ENCODE measurements at regions of chr11 and their contacts with region 1.

Region 1: GRCh38 chr11:115269191-115269950 is 234.8 kb downstream of the CADM1 start:
- DNase-seq: no peak
- CTCF ChIP-seq: no peak

Region 2: GRCh38 chr11:115279813-115280761 is 10.7 kb after region 1 on chr11:
- CTCF ChIA-PET with region 1: interaction called, 11 read pairs
- POLR2A ChIA-PET with region 1: no interaction called
- DNase-seq: no peak
- CTCF ChIP-seq: no peak